Naive thymus-derived CD4-positive, alpha-beta T cell (primary cell): ENCODE measurements at regions of chr2 and their contacts with region 1.

Region 1: DNA sequence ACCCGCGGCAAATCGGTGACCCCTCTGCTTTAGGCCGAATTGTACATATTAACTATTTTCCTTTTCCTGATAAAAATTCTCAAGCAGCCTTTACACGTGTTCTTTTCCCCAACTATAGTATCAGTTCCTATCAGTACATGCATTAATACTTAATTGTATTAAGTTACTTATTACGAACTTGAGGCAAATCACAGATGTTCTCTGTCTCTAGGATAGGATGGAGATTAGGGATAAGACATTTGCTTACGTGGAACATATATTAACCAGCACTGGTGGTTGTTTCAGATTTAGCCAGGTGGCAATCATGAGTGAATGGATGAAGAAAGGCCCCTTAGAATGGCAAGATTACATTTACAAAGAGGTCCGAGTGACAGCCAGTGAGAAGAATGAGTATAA is 675 bp downstream of the GEMIN6 start:
- DNase-seq: no peak
- ATAC-seq: no peak
- H3K4me3 ChIP-seq: peak overlapping the region; percentile 85
- H3K4me3 Mint-ChIP-seq: peak overlapping the region; percentile 94 to 100 (median 98)
- H3K27ac ChIP-seq: peak overlapping the region; percentile 81
- H3K27ac Mint-ChIP-seq: peak overlapping the region; percentile 92 to 99 (median 97)
- H3K4me1 ChIP-seq: peaks cover 0 to 5% of the 10 kb centered on the region in 2 donors
- H3K4me1 Mint-ChIP-seq: peaks cover 8 to 23% (median 17%) of the 10 kb centered on the region in 7 donors
- H3K27me3 ChIP-seq: no peaks in the 10 kb centered on the region
- H3K27me3 Mint-ChIP-seq: peaks cover 5 to 21% (median 17%) of the 10 kb centered on the region in 5 donors

Region 2: GRCh38 chr2:38765149-38765548 is 13.5 kb before region 1 on chr2:
- CTCF ChIA-PET with region 1: interaction called, 3 read pairs
- POLR2A ChIA-PET with region 1: no interaction called
- intact Hi-C with region 1: loop called in 1 of 2 experiments (anchors 2 kb)
- DNase-seq: no peak
- ATAC-seq: no peak
- H3K4me3 ChIP-seq: no peak overlapping the region
- H3K4me3 Mint-ChIP-seq: no peak overlapping the region
- H3K27ac ChIP-seq: no peak overlapping the region
- H3K27ac Mint-ChIP-seq: no peak overlapping the region
- H3K4me1 ChIP-seq: no peaks in the 10 kb centered on the region
- H3K4me1 Mint-ChIP-seq: peaks cover 0 to 7% (median 0%) of the 10 kb centered on the region in 7 donors
- H3K27me3 ChIP-seq: no peaks in the 10 kb centered on the region
- H3K27me3 Mint-ChIP-seq: no peaks in the 10 kb centered on the region

Region 3: DNA sequence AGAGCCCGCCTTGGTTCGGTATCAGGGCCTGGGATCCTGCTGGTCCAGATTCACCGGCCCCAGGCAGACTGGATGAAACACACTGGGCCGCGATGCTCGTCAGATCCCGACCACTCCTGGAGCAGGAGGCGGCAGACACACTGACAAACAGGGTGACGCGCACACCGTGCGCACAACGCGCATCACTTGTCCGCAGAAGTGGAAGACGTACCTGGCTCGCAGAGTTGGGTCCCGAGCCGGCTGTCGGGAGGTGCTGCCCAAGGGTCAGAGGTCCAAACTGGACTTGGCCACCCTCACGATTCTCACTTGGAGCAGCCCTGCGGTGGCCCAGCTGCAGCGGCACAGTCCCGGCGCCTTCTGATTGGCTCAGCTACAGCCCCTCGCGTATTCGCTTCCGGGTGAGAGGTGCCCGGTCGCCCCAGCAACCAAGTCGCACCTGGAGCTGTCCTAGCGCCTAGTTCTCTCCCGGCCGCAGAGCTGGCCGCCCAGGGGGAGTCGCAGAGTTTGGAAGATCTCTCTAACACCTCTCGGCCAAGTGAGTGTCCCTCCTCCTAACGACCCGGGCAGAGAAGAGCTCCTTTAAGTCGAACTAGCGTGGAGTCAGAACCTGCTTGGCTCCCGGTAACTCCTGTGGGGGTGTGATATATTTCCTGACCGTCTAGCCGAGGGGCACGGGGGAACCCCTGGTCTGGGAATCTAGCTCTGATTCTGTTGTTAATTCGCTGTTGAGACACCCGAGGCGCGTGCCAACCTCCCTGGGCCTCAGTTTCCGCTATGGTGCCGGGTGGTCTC is 97.1 kb after region 1 on chr2 and contains the starts of genes DHX57 and MORN2:
- CTCF ChIA-PET with region 1: no interaction called
- POLR2A ChIA-PET with region 1: no interaction called
- intact Hi-C with region 1: loop called (anchors 1 to 2 kb)
- DNase-seq: peak; percentile 64 to 83 (median 79)
- ATAC-seq: peak; percentile 98
- H3K4me3 ChIP-seq: peak within 1 kb of the TSS; percentile 91
- H3K4me3 Mint-ChIP-seq: peak within 1 kb of the TSS; percentile 94 to 100 (median 96)
- H3K27ac ChIP-seq: peak within 1 kb of the TSS; percentile 69
- H3K27ac Mint-ChIP-seq: peak within 1 kb of the TSS; percentile 82 to 99 (median 95)
- H3K4me1 ChIP-seq: peaks cover 11 to 14% of the 10 kb centered on the region in 2 donors
- H3K4me1 Mint-ChIP-seq: peaks cover 13 to 48% (median 32%) of the 10 kb centered on the region in 7 donors
- H3K27me3 ChIP-seq: no peaks in the 10 kb centered on the region
- H3K27me3 Mint-ChIP-seq: no peaks in the 10 kb centered on the region
- total RNA-seq, gene DHX57: 12.9 to 19.8 (median 18.9) TPM
- total RNA-seq, gene MORN2: 1.5 to 2.7 (median 2.1) TPM

Region 4: DNA sequence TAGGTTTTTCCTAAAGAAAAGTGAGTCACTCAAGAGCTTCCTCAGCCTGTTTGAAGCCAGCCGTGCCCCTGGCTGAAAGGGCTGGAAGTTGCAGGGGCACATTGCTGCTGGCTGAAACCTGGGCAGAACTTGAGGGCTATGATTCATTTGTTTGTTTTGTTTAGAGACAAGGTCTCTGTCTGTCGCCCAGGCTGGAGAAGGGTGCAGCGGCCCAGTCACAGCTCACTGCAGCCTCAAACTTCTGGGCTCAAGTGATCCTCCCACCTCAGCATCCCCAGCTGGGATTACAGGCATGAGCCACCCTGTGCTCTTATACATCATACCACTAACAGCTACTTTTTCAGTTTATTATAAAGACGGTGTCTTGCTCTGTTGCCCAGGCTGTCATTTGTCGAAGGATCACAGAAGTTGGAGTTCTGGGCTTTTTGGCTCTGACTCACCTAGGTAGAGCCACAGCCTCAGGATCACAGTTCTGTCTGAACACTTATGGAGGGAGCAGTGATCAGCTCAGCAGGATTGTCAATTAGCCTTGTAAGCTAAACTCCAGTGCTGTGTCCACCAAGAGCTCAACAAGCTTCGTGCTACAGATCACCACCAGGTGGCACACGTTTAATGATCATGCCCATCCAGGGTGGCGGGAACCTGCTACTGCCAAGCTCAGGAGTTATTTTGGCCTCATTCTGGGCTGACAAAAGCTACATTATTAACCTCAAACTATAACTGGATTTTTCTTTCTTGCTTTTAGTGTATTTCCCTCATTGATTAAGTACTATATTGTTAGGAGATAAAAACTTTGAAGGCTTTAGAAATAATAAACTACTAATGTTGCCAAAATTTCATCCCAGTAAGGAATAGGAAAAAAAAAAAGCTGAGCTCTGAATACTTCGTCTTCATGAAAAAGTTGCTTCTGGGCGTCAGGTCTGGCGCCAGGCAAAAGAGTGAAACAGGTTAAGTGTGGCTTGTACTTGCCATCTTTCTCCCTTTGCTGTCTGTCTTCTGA is 168.9 kb after region 1 on chr2:
- CTCF ChIA-PET with region 1: no interaction called
- POLR2A ChIA-PET with region 1: no interaction called
- intact Hi-C with region 1: no loop called
- DNase-seq: peak; percentile 8 to 57 (median 35)
- ATAC-seq: peak; percentile 67
- H3K4me3 ChIP-seq: no peak overlapping the region
- H3K4me3 Mint-ChIP-seq: no peak overlapping the region
- H3K27ac ChIP-seq: no peak overlapping the region
- H3K27ac Mint-ChIP-seq: peak overlapping the region in 1 of 9 donors; percentile 13
- H3K4me1 ChIP-seq: no peaks in the 10 kb centered on the region
- H3K4me1 Mint-ChIP-seq: peaks cover 0 to 3% (median 0%) of the 10 kb centered on the region in 7 donors
- H3K27me3 ChIP-seq: no peaks in the 10 kb centered on the region
- H3K27me3 Mint-ChIP-seq: peaks cover 0 to 6% (median 0%) of the 10 kb centered on the region in 5 donors

Region 5: DNA sequence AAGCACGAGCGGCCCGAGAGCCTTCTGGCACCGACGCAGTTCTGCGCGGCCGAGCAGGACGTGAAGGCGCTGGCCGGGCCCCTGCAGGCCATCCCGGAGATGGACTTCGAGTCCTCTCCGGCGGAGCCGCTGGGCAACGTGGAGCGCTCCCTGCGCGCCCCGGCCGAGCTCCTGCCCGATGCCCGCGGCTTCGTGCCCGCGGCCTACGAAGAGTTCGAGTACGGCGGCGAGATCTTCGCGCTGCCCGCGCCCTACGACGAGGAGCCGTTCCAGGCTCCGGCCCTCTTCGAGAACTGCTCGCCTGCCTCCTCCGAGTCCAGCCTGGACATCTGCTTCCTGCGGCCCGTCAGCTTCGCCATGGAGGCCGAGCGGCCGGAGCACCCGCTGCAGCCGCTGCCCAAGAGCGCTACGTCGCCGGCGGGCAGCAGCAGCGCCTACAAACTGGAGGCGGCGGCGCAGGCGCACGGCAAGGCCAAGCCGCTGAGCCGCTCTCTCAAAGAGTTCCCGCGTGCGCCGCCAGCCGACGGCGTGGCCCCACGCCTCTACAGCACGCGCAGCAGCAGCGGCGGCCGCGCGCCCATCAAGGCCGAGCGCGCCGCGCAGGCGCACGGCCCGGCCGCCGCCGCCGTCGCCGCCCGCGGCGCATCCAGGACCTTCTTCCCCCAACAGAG is 181.4 kb after region 1 on chr2:
- CTCF ChIA-PET with region 1: no interaction called
- POLR2A ChIA-PET with region 1: no interaction called
- intact Hi-C with region 1: loop called in 1 of 2 experiments (anchors 1 kb)
- DNase-seq: peak; percentile 30 to 71 (median 47)
- ATAC-seq: peak; percentile 98
- H3K4me3 ChIP-seq: peak overlapping the region; percentile 17
- H3K4me3 Mint-ChIP-seq: peak overlapping the region in 9 of 10 donors; percentile 21 to 76 (median 58)
- H3K27ac ChIP-seq: no peak overlapping the region
- H3K27ac Mint-ChIP-seq: no peak overlapping the region
- H3K4me1 ChIP-seq: no peaks in the 10 kb centered on the region
- H3K4me1 Mint-ChIP-seq: peaks cover 0 to 10% (median 4%) of the 10 kb centered on the region in 7 donors
- H3K27me3 ChIP-seq: no peaks in the 10 kb centered on the region
- H3K27me3 Mint-ChIP-seq: peaks cover 24 to 68% (median 30%) of the 10 kb centered on the region in 5 donors

Region 6: GRCh38 chr2:39408316-39409136 is 629.8 kb after region 1 on chr2:
- CTCF ChIA-PET with region 1: no interaction called
- POLR2A ChIA-PET with region 1: no interaction called
- intact Hi-C with region 1: no loop called
- DNase-seq: no peak
- ATAC-seq: peak; percentile 48
- H3K4me3 ChIP-seq: no peak overlapping the region
- H3K4me3 Mint-ChIP-seq: peak overlapping the region in 7 of 10 donors; percentile 0 to 50 (median 25)
- H3K27ac ChIP-seq: no peak overlapping the region
- H3K27ac Mint-ChIP-seq: peak overlapping the region in 4 of 9 donors; percentile 11 to 75 (median 66)
- H3K4me1 ChIP-seq: peaks cover under 1 to 4% of the 10 kb centered on the region in 2 donors
- H3K4me1 Mint-ChIP-seq: peaks cover 24 to 92% (median 76%) of the 10 kb centered on the region in 7 donors
- H3K27me3 ChIP-seq: no peaks in the 10 kb centered on the region
- H3K27me3 Mint-ChIP-seq: no peaks in the 10 kb centered on the region